Heart right ventricle (tissue), 16 donors: ENCODE measurements at regions of chr3 and their contacts with region 1.

Region 1: DNA sequence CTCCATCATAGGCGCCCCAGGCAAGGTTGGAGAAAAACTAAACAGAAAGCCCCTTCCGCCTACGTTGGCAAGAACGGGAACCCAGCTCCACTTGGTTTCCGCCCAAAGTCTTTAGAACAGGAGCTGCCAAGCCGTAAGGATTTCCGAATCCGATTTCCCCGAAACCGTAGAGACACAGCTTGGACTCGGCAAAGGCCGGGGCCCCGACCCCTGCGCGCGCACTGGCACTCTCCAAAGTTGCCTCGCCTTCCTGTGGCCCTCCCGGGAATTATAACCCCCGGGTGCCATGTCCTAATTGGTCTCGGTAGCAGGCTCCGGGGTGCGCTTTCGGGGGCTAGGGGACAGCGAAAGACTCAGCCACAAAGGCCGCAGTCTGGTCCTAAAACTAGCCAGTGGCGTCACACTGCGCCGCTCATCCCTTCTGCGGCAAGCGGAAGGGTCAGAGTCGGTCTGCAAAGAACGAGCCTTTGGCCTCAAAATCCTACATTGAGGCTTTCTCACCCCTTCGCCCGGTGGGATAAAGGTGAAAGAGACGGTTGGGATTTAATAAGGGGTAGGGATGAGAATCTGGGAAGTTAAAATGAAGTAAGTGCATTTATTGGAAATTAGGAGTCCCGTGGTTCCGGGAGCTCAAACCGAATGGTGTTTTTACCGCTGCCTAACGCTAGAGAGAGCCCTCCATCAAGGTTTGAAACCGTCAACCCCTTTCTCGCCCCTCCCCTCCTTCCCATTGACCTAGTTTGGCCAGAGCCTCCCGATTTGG is 6.8 kb downstream of the BCL6 start:
- DNase-seq: peak; percentile 75 to 97
- ATAC-seq: peak; percentile 60 to 82 (median 75)
- H3K4me3 ChIP-seq: peak overlapping the region; percentile 46 to 95 (median 73)
- H3K27ac ChIP-seq: peak overlapping the region; percentile 85 to 100 (median 99)
- H3K4me1 ChIP-seq: peaks cover 4 to 72% (median 38%) of the 10 kb centered on the region in 9 donors
- H3K27me3 ChIP-seq: no peaks in the 10 kb centered on the region
- CTCF ChIP-seq: peak; percentile 32 to 86 (median 73)

Region 2: DNA sequence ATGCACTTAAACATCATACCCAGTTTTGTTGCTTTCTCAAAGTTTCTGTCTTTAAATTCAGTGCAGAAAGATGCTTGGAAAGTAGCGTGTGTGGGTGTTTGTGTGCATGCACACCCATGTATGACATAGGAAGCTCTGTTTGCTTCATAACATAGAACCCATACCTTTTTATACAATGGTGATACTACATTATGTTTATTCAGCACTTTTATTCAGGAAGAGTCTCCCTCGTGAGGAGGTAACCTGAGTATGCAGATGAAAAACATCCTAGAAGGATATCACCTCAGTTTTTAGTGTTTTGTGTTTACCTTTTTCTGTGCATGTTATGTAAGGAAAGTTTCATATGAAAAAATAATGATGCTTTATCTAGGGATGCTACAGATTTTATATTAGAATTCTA is 179.5 kb before region 1 on chr3:
- intact Hi-C with region 1: no loop called
- DNase-seq: no peak
- ATAC-seq: no peak
- H3K4me3 ChIP-seq: no peak overlapping the region
- H3K27ac ChIP-seq: no peak overlapping the region
- H3K4me1 ChIP-seq: no peaks in the 10 kb centered on the region
- H3K27me3 ChIP-seq: peaks cover 0 to 5% (median 0%) of the 10 kb centered on the region in 7 donors
- CTCF ChIP-seq: no peak

Region 3: GRCh38 chr3:188262913-188263683 is 524.6 kb after region 1 on chr3:
- intact Hi-C with region 1: loop called in 7 of 10 experiments (anchors 5 to 10 kb)
- DNase-seq: peak in 1 of 2 donors; percentile 62
- ATAC-seq: peak; percentile 50 to 89 (median 84)
- H3K4me3 ChIP-seq: no peak overlapping the region
- H3K27ac ChIP-seq: peak overlapping the region; percentile 73 to 93 (median 86)
- H3K4me1 ChIP-seq: peaks cover 26 to 98% (median 74%) of the 10 kb centered on the region in 9 donors
- H3K27me3 ChIP-seq: no peaks in the 10 kb centered on the region
- CTCF ChIP-seq: no peak

Region 4: DNA sequence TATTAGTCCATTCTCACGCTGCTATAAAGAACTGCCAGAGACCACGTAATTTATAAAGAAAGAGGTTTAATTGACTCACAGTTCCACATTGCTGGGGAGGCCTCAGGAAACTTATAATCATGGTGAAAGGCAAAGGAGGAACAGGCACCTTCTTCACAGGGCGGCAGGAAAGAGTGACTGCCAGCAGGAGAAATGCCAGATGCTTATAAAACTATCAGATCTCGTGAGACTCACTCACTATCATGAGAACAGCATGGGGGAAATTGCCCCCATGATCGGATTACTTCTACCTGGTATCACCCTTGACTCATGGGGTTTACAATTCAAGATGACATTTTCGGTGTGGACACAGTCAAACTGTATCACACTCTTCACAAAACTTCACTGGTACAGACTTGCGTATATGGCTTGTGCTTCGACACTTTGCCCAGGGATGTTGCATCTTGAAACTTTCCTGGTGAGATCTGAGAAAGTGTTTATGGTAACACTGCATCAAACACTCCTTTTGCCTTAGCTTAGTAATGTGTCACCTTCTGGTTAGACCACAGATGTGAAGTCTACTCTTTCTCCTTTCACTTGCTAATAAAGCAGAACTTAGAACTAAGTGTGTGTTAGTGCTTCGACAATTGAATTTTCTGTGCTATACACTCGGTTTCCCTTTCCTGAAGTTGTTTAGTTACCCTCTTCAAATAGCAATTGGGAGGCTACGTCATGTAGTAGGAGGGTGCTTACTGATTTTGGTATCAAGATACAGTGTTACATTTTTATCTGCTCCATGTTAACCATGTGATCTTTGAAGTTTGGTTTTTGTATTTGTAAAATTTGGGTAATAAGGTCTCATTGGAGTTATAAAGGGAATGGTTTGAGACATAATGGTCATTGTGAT is 601.1 kb after region 1 on chr3:
- intact Hi-C with region 1: loop called in 3 of 10 experiments (anchors 5 to 10 kb)
- DNase-seq: no peak
- ATAC-seq: no peak
- H3K4me3 ChIP-seq: no peak overlapping the region
- H3K27ac ChIP-seq: peak overlapping the region in 6 of 10 donors; percentile 2 to 33 (median 10)
- H3K4me1 ChIP-seq: peaks cover 0 to 55% (median 26%) of the 10 kb centered on the region in 9 donors
- H3K27me3 ChIP-seq: no peaks in the 10 kb centered on the region
- CTCF ChIP-seq: no peak

Region 5: GRCh38 chr3:189041482-189042090 is 1303.1 kb after region 1 on chr3:
- intact Hi-C with region 1: loop called in 1 of 10 experiments (anchors 5 kb)
- DNase-seq: peak in 1 of 2 donors; percentile 8
- ATAC-seq: peak in 4 of 8 donors; percentile 23 to 50 (median 37)
- H3K4me3 ChIP-seq: no peak overlapping the region
- H3K27ac ChIP-seq: no peak overlapping the region
- H3K4me1 ChIP-seq: peaks cover 0 to 6% (median 0%) of the 10 kb centered on the region in 9 donors
- H3K27me3 ChIP-seq: no peaks in the 10 kb centered on the region
- CTCF ChIP-seq: peak in 6 of 9 donors; percentile 35 to 55 (median 44)

Region 6: GRCh38 chr3:189132231-189132707 is 1393.8 kb after region 1 on chr3:
- intact Hi-C with region 1: loop called in 1 of 10 experiments (anchors 1 kb)
- DNase-seq: peak; percentile 30 to 31
- ATAC-seq: peak; percentile 17 to 89 (median 70)
- H3K4me3 ChIP-seq: no peak overlapping the region
- H3K27ac ChIP-seq: peak overlapping the region in 9 of 10 donors; percentile 6 to 82 (median 42)
- H3K4me1 ChIP-seq: peaks cover 0 to 27% (median 9%) of the 10 kb centered on the region in 9 donors
- H3K27me3 ChIP-seq: no peaks in the 10 kb centered on the region
- CTCF ChIP-seq: no peak

Region 7: GRCh38 chr3:189148081-189148507 is 1409.6 kb after region 1 on chr3:
- intact Hi-C with region 1: loop called (anchors 2 to 10 kb)
- DNase-seq: peak; percentile 23 to 68
- ATAC-seq: peak; percentile 56 to 79 (median 70)
- H3K4me3 ChIP-seq: no peak overlapping the region
- H3K27ac ChIP-seq: peak overlapping the region in 2 of 10 donors; percentile 11 to 46
- H3K4me1 ChIP-seq: peaks cover 0 to 32% (median 7%) of the 10 kb centered on the region in 9 donors
- H3K27me3 ChIP-seq: no peaks in the 10 kb centered on the region
- CTCF ChIP-seq: peak; percentile 68 to 85 (median 78)

Region 8: GRCh38 chr3:189233225-189233858 is 1494.8 kb after region 1 on chr3:
- intact Hi-C with region 1: loop called in 1 of 10 experiments (anchors 5 kb)
- DNase-seq: peak; percentile 14 to 54
- ATAC-seq: peak in 7 of 8 donors; percentile 74 to 89 (median 80)
- H3K4me3 ChIP-seq: no peak overlapping the region
- H3K27ac ChIP-seq: no peak overlapping the region
- H3K4me1 ChIP-seq: peaks cover 0 to 7% (median 0%) of the 10 kb centered on the region in 9 donors
- H3K27me3 ChIP-seq: no peaks in the 10 kb centered on the region
- CTCF ChIP-seq: peak; percentile 24 to 78 (median 61)